Activated T-helper 1 cell treated with anti-CD3 and anti-CD28 coated beads, Interleukin-12 subunit alpha, Interleukin-12 subunit beta, Interleukin-2, Interleukin-4 antibody, amounts not matched to agents 30 ng/mL and 10 ng/mL and 1 ng/mL, durations not matched to agents 14 hours and 24 hours and 36 hours (primary cell): ENCODE measurements at regions of chr1 and their contacts with region 1.

Region 1: GRCh38 chr1:202274611-202275010 is 67.1 kb downstream of the UBE2T start:
- DNase-seq: peak; percentile 17
- H3K4me3 Mint-ChIP-seq: no peak overlapping the region
- H3K27ac Mint-ChIP-seq: no peak overlapping the region
- H3K4me1 Mint-ChIP-seq: no peaks in the 10 kb centered on the region
- H3K27me3 Mint-ChIP-seq: peaks cover 18% of the 10 kb centered on the region

Region 2: DNA sequence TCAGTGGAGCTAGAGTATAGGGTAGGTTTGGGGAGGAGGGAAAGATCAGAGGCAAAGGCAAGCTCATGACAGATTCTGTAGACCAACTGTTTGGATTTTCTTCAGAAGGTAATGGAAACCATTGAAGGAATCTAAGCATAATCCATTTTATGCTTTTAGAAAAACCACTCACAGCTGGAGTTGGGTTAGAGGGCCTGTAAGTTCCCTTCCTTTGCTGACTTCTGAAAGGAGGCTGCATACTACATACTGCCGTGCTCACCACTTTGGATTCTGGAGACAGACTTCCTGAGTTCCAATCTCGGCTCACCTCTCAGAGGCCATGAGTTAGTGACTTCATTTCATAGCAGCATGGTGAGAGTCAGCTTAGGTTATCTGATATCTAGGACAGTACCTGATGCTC is 442.0 kb after region 1 on chr1:
- intact Hi-C with region 1: loop called (anchors 1 kb)
- DNase-seq: no peak
- H3K4me3 Mint-ChIP-seq: no peak overlapping the region
- H3K27ac Mint-ChIP-seq: no peak overlapping the region
- H3K4me1 Mint-ChIP-seq: no peaks in the 10 kb centered on the region
- H3K27me3 Mint-ChIP-seq: peaks cover 48% of the 10 kb centered on the region